CD8-positive, alpha-beta T cell (primary cell): ENCODE measurements at regions of chr12 and their contacts with region 1.

Region 1: DNA sequence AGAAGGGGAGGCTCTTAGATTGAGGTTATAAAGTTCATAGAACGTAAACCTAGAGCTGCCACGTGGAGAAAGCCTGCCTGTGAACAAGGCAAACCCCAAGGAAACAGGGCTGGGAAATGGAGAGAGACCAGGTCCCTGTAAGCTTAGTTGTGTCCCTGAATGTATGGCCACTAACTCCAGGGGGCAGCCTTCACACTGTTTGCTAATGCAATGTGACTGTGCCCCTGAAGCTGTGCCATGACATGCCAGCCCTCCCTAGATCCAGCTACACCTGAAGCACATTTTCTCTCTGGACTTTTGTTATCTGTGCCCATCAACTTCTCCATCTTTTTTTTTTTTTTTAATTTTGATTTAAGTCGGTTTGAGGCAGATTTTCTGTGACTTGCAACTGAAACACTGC is 60.6 kb upstream of the TMCC3 start:
- DNase-seq: peak in 5 of 9 experiments; percentile 16 to 51 (median 26)
- ATAC-seq: peak; percentile 34
- H3K4me3 ChIP-seq: no peak overlapping the region
- H3K4me3 Mint-ChIP-seq: no peak overlapping the region
- H3K27ac ChIP-seq: no peak overlapping the region
- H3K27ac Mint-ChIP-seq: no peak overlapping the region
- H3K4me1 ChIP-seq: no peaks in the 10 kb centered on the region
- H3K4me1 Mint-ChIP-seq: no peaks in the 10 kb centered on the region
- H3K27me3 ChIP-seq: no peaks in the 10 kb centered on the region
- H3K27me3 Mint-ChIP-seq: no peaks in the 10 kb centered on the region
- CTCF ChIP-seq: no peak

Region 2: GRCh38 chr12:94973221-94973620 is 262.3 kb after region 1 on chr12:
- CTCF ChIA-PET with region 1: no interaction called
- POLR2A ChIA-PET with region 1: no interaction called
- intact Hi-C with region 1: loop called in 1 of 2 experiments (anchors 10 kb)
- DNase-seq: no peak
- ATAC-seq: no peak
- H3K4me3 ChIP-seq: no peak overlapping the region
- H3K4me3 Mint-ChIP-seq: no peak overlapping the region
- H3K27ac ChIP-seq: no peak overlapping the region
- H3K27ac Mint-ChIP-seq: no peak overlapping the region
- H3K4me1 ChIP-seq: no peaks in the 10 kb centered on the region
- H3K4me1 Mint-ChIP-seq: peaks cover 16% of the 10 kb centered on the region
- H3K27me3 ChIP-seq: no peaks in the 10 kb centered on the region
- H3K27me3 Mint-ChIP-seq: no peaks in the 10 kb centered on the region
- CTCF ChIP-seq: no peak